ENCODE measurements at regions of chr4 and their contacts with region 1.

Region 1: DNA sequence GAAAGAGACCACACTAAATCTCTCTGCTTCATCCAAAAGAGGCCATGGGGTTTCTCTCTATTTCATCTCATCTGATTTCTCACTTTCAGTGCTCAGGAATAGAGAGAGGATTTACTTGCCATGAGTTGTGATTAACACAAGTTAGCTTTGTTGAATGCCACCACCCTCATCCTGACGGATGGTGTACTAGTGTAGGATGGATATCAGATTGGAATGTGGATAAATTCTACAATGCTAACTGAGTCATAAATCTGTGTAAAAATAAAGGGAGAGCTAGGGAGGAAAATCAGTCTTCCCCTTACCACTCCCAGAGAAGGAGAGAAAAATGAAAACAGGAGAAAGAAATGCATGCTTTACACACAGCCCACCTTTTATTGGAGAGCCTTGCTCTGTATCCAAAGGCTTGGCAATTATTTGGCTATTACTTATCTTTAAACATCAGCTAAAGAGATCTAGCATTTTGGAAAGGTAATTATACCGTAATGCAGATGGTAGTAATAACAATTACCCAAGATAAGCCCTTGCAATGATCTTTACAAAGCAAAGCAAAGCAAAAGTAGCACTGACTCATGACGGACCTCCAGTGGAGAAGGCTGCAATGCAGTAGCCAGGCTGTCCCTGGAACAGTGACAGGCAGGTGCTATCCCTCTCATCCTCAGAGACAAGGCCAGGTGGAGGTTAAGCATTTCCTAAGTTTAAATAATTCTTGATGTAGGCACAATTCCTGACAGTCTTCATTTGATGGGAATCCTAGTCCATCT is 306.3 kb upstream of the PPARGC1A start:
- DNase-seq: no peak
- ATAC-seq: peak; percentile 59

Region 2: DNA sequence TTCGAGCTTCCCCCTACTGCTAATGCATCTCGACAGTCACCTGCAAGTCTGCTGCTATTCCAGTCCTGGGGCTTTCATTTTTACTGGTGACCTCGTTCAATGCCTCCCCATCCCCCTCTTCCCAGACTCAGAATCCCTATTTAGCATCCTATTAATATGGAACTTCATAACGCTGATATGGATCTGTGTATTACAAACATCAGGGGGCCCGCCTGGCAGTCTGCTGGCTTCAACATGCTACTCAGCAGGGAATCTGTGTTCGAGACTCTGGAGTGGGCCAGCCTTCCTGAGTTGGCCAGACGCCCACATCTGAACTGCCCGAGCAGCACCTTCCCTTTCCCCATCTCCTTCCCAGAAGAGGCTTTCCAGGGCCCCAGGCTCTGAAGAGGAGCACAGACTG is 132.4 kb before region 1 on chr4:
- intact Hi-C with region 1: no loop called
- DNase-seq: no peak
- ATAC-seq: no peak

Region 3: GRCh38 chr4:24236532-24236931 is 40.4 kb after region 1 on chr4:
- intact Hi-C with region 1: loop called (anchors 5 kb)
- DNase-seq: no peak
- ATAC-seq: no peak